Activated naive CD4-positive, alpha-beta T cell treated with anti-CD3 and anti-CD28 coated beads for 36 hours (primary cell): ENCODE measurements at regions of chr12 and their contacts with region 1.

Region 1: GRCh38 chr12:64610149-64610678 is at the start of gene RASSF3:
- DNase-seq: peak; percentile 83
- H3K4me3 Mint-ChIP-seq: peak within 1 kb of the TSS; percentile 95
- H3K27ac Mint-ChIP-seq: peak within 1 kb of the TSS; percentile 96
- H3K4me1 Mint-ChIP-seq: peaks cover 43% of the 10 kb centered on the region
- H3K27me3 Mint-ChIP-seq: no peaks in the 10 kb centered on the region
- total RNA-seq, gene RASSF3: 39.4 to 43.8 TPM

Region 2: DNA sequence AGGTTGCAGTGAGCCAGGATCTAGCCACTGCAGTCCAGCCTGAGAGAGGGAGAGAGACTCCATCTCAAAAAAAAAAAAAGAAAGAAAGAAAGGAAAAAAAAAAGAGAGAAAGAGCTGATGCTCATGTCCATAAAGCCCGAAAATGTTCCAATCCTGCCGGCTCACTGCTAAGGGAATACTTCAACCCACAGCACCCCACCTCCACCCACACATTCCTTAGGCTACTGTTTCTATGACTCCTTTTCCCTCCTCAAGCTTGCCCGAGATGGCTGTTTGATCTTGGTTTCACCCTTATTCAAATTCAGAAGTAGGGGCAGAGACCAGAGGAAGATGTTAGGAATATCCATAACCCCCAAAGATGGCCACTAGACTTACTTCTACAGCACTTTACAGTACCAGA is 59.5 kb before region 1 on chr12:
- CTCF ChIA-PET with region 1: interaction called, 27 read pairs
- intact Hi-C with region 1: loop called (anchors 1 kb)
- DNase-seq: no peak
- H3K4me3 Mint-ChIP-seq: no peak overlapping the region
- H3K27ac Mint-ChIP-seq: no peak overlapping the region
- H3K4me1 Mint-ChIP-seq: peaks cover 7% of the 10 kb centered on the region
- H3K27me3 Mint-ChIP-seq: no peaks in the 10 kb centered on the region

Region 3: GRCh38 chr12:64625243-64626077 is 15.2 kb after region 1 on chr12:
- CTCF ChIA-PET with region 1: interaction called, 3 read pairs
- intact Hi-C with region 1: loop called (anchors 1 kb)
- DNase-seq: peak; percentile 62
- H3K4me3 Mint-ChIP-seq: peak overlapping the region; percentile 57
- H3K27ac Mint-ChIP-seq: peak overlapping the region; percentile 86
- H3K4me1 Mint-ChIP-seq: peaks cover 69% of the 10 kb centered on the region
- H3K27me3 Mint-ChIP-seq: no peaks in the 10 kb centered on the region

Region 4: DNA sequence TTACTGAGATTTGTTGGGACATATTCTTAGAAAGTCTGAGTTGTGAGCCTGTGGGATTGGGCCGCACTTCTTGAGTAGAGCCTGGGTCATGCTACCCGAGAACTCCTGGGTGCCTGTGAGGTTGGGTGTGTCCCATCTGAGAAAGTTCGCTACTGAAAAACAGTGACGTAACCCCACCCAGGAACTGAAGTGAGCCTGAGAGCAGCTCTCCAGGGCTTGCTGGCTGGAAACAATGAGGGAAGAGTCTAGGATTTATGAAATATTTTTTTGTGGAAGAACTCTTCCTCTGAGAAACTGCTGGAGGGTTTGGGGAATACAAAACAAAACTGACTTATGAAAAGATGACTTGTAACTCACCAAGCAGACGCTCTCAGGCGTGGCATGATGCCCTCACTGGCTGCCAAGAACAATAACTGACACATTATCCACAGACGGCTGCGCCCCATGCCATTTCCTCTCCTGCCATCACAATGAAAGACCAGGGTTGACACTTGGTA is 69.3 kb after region 1 on chr12:
- CTCF ChIA-PET with region 1: interaction called, 12 read pairs
- intact Hi-C with region 1: loop called (anchors 2 kb)
- DNase-seq: peak; percentile 72
- H3K4me3 Mint-ChIP-seq: peak overlapping the region; percentile 53
- H3K27ac Mint-ChIP-seq: peak overlapping the region; percentile 89
- H3K4me1 Mint-ChIP-seq: peaks cover 95% of the 10 kb centered on the region
- H3K27me3 Mint-ChIP-seq: no peaks in the 10 kb centered on the region

Region 5: GRCh38 chr12:64696080-64696741 is 86.0 kb after region 1 on chr12:
- CTCF ChIA-PET with region 1: interaction called, 27 read pairs
- intact Hi-C with region 1: loop called (anchors 1 kb)
- DNase-seq: no peak
- H3K4me3 Mint-ChIP-seq: no peak overlapping the region
- H3K27ac Mint-ChIP-seq: peak overlapping the region; percentile 40
- H3K4me1 Mint-ChIP-seq: peaks cover 75% of the 10 kb centered on the region
- H3K27me3 Mint-ChIP-seq: no peaks in the 10 kb centered on the region

Region 6: DNA sequence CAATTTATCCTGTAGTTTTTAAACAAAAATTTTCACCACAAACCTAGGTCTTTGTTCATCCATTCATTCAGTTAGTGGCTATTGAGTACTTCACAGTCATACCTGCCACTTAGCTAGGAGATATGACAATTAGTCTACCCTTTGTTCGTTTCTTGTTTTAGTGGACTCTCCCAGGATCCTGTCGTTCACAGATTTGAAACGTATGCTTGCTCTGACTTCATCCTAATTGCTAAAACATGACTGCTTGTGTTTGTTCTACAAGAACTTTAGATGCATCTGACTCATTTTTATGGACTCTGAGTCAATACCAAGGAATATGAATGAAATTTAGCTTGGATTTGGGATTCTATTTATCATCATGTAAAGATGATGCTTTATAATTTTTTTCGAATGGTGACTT is 283.7 kb after region 1 on chr12:
- CTCF ChIA-PET with region 1: no interaction called
- intact Hi-C with region 1: no loop called
- DNase-seq: no peak
- H3K4me3 Mint-ChIP-seq: no peak overlapping the region
- H3K27ac Mint-ChIP-seq: no peak overlapping the region
- H3K4me1 Mint-ChIP-seq: peaks cover 2% of the 10 kb centered on the region
- H3K27me3 Mint-ChIP-seq: peaks cover 18% of the 10 kb centered on the region

Region 7: GRCh38 chr12:65051218-65051617 is 441.0 kb after region 1 on chr12:
- CTCF ChIA-PET with region 1: no interaction called
- intact Hi-C with region 1: no loop called
- DNase-seq: no peak
- H3K4me3 Mint-ChIP-seq: no peak overlapping the region
- H3K27ac Mint-ChIP-seq: no peak overlapping the region
- H3K4me1 Mint-ChIP-seq: no peaks in the 10 kb centered on the region
- H3K27me3 Mint-ChIP-seq: peaks cover 11% of the 10 kb centered on the region